Naive thymus-derived CD4-positive, alpha-beta T cell (primary cell): ENCODE measurements at regions of chr7 and their contacts with region 1.

Region 1: DNA sequence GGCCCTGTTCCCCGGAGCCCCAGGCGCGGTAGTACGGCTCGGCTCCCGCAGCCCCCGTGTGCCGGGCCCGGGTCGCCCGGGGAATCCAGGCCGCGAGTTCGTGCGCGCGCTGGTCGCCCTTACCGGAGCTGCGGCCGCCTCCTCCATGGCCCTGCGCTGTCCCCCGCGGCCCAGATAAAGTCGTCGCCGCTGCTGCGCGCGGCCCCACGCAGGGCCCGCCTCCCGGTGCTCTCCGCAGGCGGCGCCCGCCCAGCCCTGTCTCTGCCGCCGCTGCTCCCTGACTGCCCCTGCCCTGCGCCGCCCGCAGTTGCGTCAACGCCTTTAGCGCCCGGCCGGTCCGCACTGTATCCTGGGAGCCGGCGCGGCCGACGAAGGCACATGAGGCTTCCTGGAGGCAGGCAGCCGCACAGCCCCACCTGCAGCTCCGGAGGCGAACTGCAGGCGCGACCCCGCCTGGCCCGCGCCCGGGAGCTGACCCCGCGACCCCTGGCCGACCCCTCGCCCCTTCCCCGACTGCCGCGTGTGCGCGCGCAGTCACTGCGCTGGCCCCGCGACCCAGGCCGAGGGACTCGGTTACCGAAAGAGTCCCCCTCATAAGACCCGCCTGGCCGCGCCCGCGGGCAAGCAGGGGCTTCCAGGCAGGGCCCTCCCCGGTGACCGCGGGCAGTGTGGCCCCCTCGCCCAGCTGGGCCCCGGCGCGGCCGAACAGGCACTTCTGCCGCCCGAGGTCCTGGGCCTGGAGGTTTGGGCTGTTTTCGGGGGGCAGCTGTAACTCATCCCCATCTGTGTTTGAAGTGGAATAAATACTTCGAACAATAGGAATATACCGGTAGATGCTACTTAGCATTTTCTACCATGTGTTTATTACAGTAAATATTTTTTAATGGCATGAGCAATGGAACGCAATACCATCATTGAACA is 127.1 kb upstream of the ZNF746 start:
- DNase-seq: peak; percentile 79 to 93 (median 84)
- ATAC-seq: peak; percentile 95
- H3K4me3 ChIP-seq: peak overlapping the region; percentile 88
- H3K4me3 Mint-ChIP-seq: peak overlapping the region; percentile 91 to 96 (median 94)
- H3K27ac ChIP-seq: peak overlapping the region; percentile 80
- H3K27ac Mint-ChIP-seq: peak overlapping the region; percentile 50 to 95 (median 90)
- H3K4me1 ChIP-seq: peaks cover 19 to 37% of the 10 kb centered on the region in 2 donors
- H3K4me1 Mint-ChIP-seq: peaks cover 28 to 42% (median 37%) of the 10 kb centered on the region in 7 donors
- H3K27me3 ChIP-seq: no peaks in the 10 kb centered on the region
- H3K27me3 Mint-ChIP-seq: peaks cover 0 to 24% (median 4%) of the 10 kb centered on the region in 5 donors

Region 2: DNA sequence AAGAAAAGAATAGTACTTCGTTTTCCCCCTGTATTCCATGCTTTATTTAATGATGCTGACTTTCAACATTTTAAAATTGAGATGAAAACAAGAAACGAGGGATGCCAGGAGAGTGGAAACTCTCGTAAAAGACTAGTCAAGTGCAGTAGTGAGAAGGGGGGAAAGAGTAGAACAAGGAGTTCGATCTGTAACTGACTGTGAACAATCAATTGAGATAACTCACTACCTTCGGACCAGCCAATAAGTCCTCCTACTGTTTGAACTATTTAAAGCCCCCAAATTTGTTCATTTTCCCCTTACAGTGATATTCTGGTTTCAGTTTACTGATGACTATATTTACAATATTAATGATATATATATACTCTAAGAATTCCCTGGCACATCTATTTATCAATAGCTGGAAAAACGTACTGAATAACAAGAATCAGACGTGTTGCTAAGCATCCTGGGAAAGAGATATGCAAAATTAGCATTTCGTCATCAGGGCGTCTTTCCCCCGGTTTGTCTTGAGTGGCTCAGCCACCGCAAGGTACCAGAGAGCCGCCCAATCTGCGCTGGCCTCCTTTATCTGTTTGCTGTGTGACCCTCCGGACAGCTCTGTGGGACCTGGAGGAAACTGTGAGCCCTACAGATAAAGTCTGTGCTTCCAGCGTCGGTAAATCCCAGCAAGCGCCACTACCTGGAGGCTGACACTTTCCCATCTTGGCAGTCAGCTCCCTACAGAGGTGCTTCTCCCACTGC is 637.5 kb before region 1 on chr7:
- CTCF ChIA-PET with region 1: no interaction called
- POLR2A ChIA-PET with region 1: no interaction called
- intact Hi-C with region 1: loop called in 1 of 2 experiments (anchors 10 kb)
- DNase-seq: peak; percentile 43 to 91 (median 88)
- ATAC-seq: peak; percentile 87
- H3K4me3 ChIP-seq: peak overlapping the region; percentile 97
- H3K4me3 Mint-ChIP-seq: peak overlapping the region; percentile 92 to 99 (median 98)
- H3K27ac ChIP-seq: peak overlapping the region; percentile 85
- H3K27ac Mint-ChIP-seq: peak overlapping the region; percentile 90 to 97 (median 96)
- H3K4me1 ChIP-seq: peaks cover 26% of the 10 kb centered on the region in 2 donors
- H3K4me1 Mint-ChIP-seq: peaks cover 26 to 53% (median 48%) of the 10 kb centered on the region in 7 donors
- H3K27me3 ChIP-seq: no peaks in the 10 kb centered on the region
- H3K27me3 Mint-ChIP-seq: peaks cover 0 to 27% (median 0%) of the 10 kb centered on the region in 5 donors

Region 3: GRCh38 chr7:149195180-149196150 is 429.2 kb before region 1 on chr7 and contains the start of gene ZNF282:
- CTCF ChIA-PET with region 1: no interaction called
- POLR2A ChIA-PET with region 1: no interaction called
- intact Hi-C with region 1: loop called in 1 of 2 experiments (anchors 5 kb)
- DNase-seq: peak; percentile 43 to 84 (median 56)
- ATAC-seq: peak; percentile 91
- H3K4me3 ChIP-seq: peak within 1 kb of the TSS; percentile 82
- H3K4me3 Mint-ChIP-seq: peak within 1 kb of the TSS; percentile 83 to 94 (median 90)
- H3K27ac ChIP-seq: peak within 1 kb of the TSS; percentile 77
- H3K27ac Mint-ChIP-seq: peak within 1 kb of the TSS; percentile 79 to 97 (median 86)
- H3K4me1 ChIP-seq: peaks cover 6 to 8% of the 10 kb centered on the region in 2 donors
- H3K4me1 Mint-ChIP-seq: peaks cover 20 to 52% (median 47%) of the 10 kb centered on the region in 7 donors
- H3K27me3 ChIP-seq: no peaks in the 10 kb centered on the region
- H3K27me3 Mint-ChIP-seq: peaks cover 0 to 3% (median 0%) of the 10 kb centered on the region in 5 donors
- total RNA-seq, gene ZNF282: 12.1 to 36.7 (median 15.1) TPM

Region 4: DNA sequence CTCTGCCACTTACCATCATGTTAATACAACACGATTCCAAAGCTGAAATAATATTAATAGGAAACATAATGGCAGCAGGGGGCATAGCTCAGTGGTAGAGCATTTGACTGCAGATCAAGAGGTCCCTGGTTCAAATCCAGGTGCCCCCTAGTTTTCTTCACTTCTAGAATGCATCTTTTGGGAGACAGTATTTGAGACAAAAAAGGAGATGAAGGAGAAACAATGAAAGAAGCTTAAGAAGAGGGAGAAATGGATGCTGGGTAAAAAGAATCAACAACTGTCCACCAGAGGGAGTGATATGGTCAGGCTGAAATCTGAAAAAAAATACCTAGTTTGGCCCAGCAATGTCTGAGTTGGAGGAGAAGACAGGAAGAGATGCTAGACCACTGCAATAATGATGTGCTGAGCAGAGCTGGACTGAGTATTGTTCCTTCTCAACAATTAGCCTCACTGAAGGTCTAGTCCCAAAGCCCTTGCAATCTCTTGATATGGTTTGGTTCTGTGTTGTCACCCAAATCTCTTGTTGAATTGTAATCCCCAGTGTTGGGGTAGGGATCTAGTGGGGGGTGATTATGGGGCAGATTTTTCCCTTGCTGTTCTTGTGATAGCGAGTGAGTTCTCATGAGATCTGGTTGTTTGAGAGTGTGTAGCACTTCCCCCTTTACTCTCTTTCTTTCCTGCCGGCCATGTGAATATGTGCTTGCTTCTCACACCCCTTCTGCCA is 314.4 kb before region 1 on chr7:
- CTCF ChIA-PET with region 1: no interaction called
- POLR2A ChIA-PET with region 1: no interaction called
- intact Hi-C with region 1: loop called in 1 of 2 experiments (anchors 5 kb)
- DNase-seq: peak in 3 of 9 donors; percentile 11 to 30 (median 26)
- ATAC-seq: peak; percentile 65
- H3K4me3 ChIP-seq: no peak overlapping the region
- H3K4me3 Mint-ChIP-seq: peak overlapping the region in 1 of 10 donors; percentile 0
- H3K27ac ChIP-seq: no peak overlapping the region
- H3K27ac Mint-ChIP-seq: peak overlapping the region in 5 of 9 donors; percentile 2 to 42 (median 9)
- H3K4me1 ChIP-seq: no peaks in the 10 kb centered on the region
- H3K4me1 Mint-ChIP-seq: peaks cover 0 to 6% (median 5%) of the 10 kb centered on the region in 7 donors
- H3K27me3 ChIP-seq: no peaks in the 10 kb centered on the region
- H3K27me3 Mint-ChIP-seq: peaks cover 0 to 12% (median 0%) of the 10 kb centered on the region in 5 donors

Region 5: DNA sequence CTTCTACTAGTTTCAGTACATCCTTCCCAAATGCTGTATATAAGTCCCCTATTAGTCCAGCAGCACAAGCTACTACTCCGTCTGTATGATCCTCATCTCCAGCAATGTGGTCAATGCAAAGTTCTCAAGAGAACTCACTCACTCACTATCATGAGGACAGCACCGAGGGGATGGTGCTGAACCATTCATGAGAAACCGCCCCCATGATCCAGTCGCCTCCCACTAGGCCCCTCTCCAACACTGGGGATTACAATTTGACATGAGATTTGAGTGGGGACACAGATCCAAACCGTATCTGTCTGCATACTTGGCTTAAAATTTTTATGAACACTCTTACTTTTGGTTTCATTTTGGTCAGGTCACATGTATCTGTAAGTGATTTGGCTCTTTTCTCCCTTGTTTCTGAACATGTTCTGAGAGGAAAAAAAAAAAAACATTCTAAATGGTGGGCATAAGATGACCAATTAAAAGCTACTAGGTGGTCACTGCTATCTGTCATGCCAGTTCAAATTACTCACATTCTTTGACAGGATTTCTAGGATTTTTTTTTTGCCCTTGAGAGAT is 302.6 kb before region 1 on chr7:
- CTCF ChIA-PET with region 1: no interaction called
- POLR2A ChIA-PET with region 1: no interaction called
- intact Hi-C with region 1: no loop called
- DNase-seq: peak in 2 of 9 donors; percentile 6
- ATAC-seq: no peak
- H3K4me3 ChIP-seq: peak overlapping the region; percentile 15
- H3K4me3 Mint-ChIP-seq: peak overlapping the region; percentile 1 to 74 (median 70)
- H3K27ac ChIP-seq: no peak overlapping the region
- H3K27ac Mint-ChIP-seq: peak overlapping the region in 6 of 9 donors; percentile 7 to 86 (median 64)
- H3K4me1 ChIP-seq: no peaks in the 10 kb centered on the region
- H3K4me1 Mint-ChIP-seq: peaks cover 7 to 29% (median 19%) of the 10 kb centered on the region in 7 donors
- H3K27me3 ChIP-seq: no peaks in the 10 kb centered on the region
- H3K27me3 Mint-ChIP-seq: peaks cover 7 to 12% (median 9%) of the 10 kb centered on the region in 5 donors

Region 6: GRCh38 chr7:149497456-149498261 is 127.0 kb before region 1 on chr7 and contains the start of gene ZNF746:
- CTCF ChIA-PET with region 1: no interaction called
- POLR2A ChIA-PET with region 1: no interaction called
- intact Hi-C with region 1: loop called (anchors 1 to 2 kb)
- DNase-seq: peak; percentile 57 to 85 (median 76)
- ATAC-seq: peak; percentile 96
- H3K4me3 ChIP-seq: peak within 1 kb of the TSS; percentile 67
- H3K4me3 Mint-ChIP-seq: peak within 1 kb of the TSS; percentile 92 to 99 (median 96)
- H3K27ac ChIP-seq: peak within 1 kb of the TSS; percentile 82
- H3K27ac Mint-ChIP-seq: peak within 1 kb of the TSS; percentile 84 to 97 (median 95)
- H3K4me1 ChIP-seq: peaks cover 19 to 27% of the 10 kb centered on the region in 2 donors
- H3K4me1 Mint-ChIP-seq: peaks cover 21 to 46% (median 30%) of the 10 kb centered on the region in 7 donors
- H3K27me3 ChIP-seq: no peaks in the 10 kb centered on the region
- H3K27me3 Mint-ChIP-seq: peaks cover 0 to 3% (median 0%) of the 10 kb centered on the region in 5 donors
- total RNA-seq, gene ZNF746: 23.6 to 32.0 (median 24.4) TPM

Region 7: DNA sequence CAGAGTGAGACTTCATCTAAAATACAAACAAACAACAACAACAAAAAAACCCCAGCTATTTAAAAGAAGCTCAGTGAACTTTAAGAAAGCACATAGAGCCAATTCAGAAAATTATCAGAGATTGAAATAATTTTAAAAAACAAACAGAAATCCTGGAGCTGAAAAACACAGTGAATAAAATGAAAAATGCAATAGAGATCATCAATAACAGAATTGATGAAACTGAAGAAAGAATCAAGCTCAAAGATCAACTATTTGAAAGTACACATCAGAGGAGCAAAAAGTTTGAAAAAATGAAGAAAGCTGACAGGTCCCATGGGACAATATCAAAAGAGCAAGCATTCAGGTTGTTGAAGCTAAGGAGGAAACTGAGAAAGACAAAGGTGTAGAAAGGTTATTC is 114.9 kb before region 1 on chr7:
- CTCF ChIA-PET with region 1: no interaction called
- POLR2A ChIA-PET with region 1: no interaction called
- intact Hi-C with region 1: no loop called
- DNase-seq: no peak
- ATAC-seq: no peak
- H3K4me3 ChIP-seq: no peak overlapping the region
- H3K4me3 Mint-ChIP-seq: no peak overlapping the region
- H3K27ac ChIP-seq: no peak overlapping the region
- H3K27ac Mint-ChIP-seq: no peak overlapping the region
- H3K4me1 ChIP-seq: no peaks in the 10 kb centered on the region
- H3K4me1 Mint-ChIP-seq: no peaks in the 10 kb centered on the region
- H3K27me3 ChIP-seq: no peaks in the 10 kb centered on the region
- H3K27me3 Mint-ChIP-seq: peaks cover 0 to 13% (median 0%) of the 10 kb centered on the region in 5 donors

Region 8: GRCh38 chr7:149838224-149838947 is 213.7 kb after region 1 on chr7 and contains the start of gene ZNF862:
- CTCF ChIA-PET with region 1: no interaction called
- POLR2A ChIA-PET with region 1: no interaction called
- intact Hi-C with region 1: loop called in 1 of 2 experiments (anchors 1 kb)
- DNase-seq: peak; percentile 84 to 96 (median 94)
- ATAC-seq: peak; percentile 99
- H3K4me3 ChIP-seq: peak within 1 kb of the TSS; percentile 67
- H3K4me3 Mint-ChIP-seq: peak within 1 kb of the TSS; percentile 85 to 97 (median 91)
- H3K27ac ChIP-seq: peak within 1 kb of the TSS; percentile 79
- H3K27ac Mint-ChIP-seq: peak within 1 kb of the TSS; percentile 77 to 96 (median 88)
- H3K4me1 ChIP-seq: peaks cover 12 to 22% of the 10 kb centered on the region in 2 donors
- H3K4me1 Mint-ChIP-seq: peaks cover 25 to 52% (median 48%) of the 10 kb centered on the region in 7 donors
- H3K27me3 ChIP-seq: no peaks in the 10 kb centered on the region
- H3K27me3 Mint-ChIP-seq: peaks cover 0 to 15% (median 3%) of the 10 kb centered on the region in 5 donors
- total RNA-seq, gene ZNF862: 36.9 to 112 (median 41.8) TPM

Region 9: DNA sequence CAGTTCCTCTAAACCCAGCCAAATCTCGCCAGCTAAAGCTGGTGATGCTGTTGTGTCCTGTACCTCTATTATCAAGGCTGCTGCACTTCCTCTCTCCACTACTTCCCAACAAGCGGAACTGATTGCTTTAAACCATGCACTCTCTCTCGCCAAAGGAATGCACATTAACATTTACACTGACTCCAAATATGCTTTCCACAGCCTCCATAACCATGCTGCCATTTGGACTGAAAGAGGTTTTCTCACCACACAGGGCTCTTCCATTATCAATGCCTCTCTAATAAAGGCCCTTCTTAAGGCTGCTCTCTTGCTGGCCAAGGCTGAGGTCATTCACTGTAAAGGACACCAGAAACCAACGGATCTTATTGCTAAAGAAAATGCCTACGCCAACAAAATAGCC is 687.0 kb after region 1 on chr7:
- CTCF ChIA-PET with region 1: no interaction called
- POLR2A ChIA-PET with region 1: no interaction called
- intact Hi-C with region 1: no loop called
- DNase-seq: no peak
- ATAC-seq: no peak
- H3K4me3 ChIP-seq: no peak overlapping the region
- H3K4me3 Mint-ChIP-seq: no peak overlapping the region
- H3K27ac ChIP-seq: no peak overlapping the region
- H3K27ac Mint-ChIP-seq: no peak overlapping the region
- H3K4me1 ChIP-seq: no peaks in the 10 kb centered on the region
- H3K4me1 Mint-ChIP-seq: peaks cover 0 to 15% (median 0%) of the 10 kb centered on the region in 7 donors
- H3K27me3 ChIP-seq: no peaks in the 10 kb centered on the region
- H3K27me3 Mint-ChIP-seq: no peaks in the 10 kb centered on the region

Region 10: DNA sequence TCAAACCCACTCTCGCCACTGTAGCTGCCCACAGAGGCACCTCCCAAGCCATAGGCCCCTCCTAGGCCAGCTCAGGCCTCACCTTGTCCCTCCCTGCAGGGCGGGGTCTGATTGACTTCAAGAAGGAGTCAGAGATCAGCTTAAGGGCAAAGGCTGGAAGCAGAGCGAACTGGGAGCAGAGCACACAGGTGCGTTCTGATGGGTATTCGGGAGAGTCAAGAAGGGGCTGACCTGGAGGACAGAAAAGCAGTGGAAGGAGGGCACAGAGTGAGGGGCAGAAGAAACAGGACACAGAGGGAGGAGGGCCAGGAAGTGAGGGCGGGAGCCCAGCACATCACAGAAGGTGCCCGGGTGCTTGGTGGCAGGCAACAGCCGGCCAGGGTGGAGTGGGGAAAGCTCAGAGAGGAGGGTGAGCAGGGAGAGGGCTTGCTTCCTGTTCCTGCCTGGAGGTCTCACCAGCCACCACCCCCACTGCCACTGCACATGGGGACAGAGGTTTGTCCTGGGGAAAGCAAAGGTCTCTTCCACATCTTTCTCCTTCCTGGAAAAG is 1227.8 kb after region 1 on chr7 and contains the start of gene AOC1:
- CTCF ChIA-PET with region 1: no interaction called
- POLR2A ChIA-PET with region 1: no interaction called
- intact Hi-C with region 1: no loop called
- DNase-seq: no peak
- ATAC-seq: no peak
- H3K4me3 ChIP-seq: no peak within 1 kb of the TSS
- H3K4me3 Mint-ChIP-seq: no peak within 1 kb of the TSS
- H3K27ac ChIP-seq: no peak within 1 kb of the TSS
- H3K27ac Mint-ChIP-seq: no peak within 1 kb of the TSS
- H3K4me1 ChIP-seq: no peaks in the 10 kb centered on the region
- H3K4me1 Mint-ChIP-seq: peaks cover 0 to 5% (median 0%) of the 10 kb centered on the region in 7 donors
- H3K27me3 ChIP-seq: peaks cover 0 to 5% of the 10 kb centered on the region in 2 donors
- H3K27me3 Mint-ChIP-seq: peaks cover 17 to 40% (median 22%) of the 10 kb centered on the region in 5 donors
- total RNA-seq, gene AOC1: 0.56 TPM in 1 of 5 experiments, not detected in the others

Region 11: DNA sequence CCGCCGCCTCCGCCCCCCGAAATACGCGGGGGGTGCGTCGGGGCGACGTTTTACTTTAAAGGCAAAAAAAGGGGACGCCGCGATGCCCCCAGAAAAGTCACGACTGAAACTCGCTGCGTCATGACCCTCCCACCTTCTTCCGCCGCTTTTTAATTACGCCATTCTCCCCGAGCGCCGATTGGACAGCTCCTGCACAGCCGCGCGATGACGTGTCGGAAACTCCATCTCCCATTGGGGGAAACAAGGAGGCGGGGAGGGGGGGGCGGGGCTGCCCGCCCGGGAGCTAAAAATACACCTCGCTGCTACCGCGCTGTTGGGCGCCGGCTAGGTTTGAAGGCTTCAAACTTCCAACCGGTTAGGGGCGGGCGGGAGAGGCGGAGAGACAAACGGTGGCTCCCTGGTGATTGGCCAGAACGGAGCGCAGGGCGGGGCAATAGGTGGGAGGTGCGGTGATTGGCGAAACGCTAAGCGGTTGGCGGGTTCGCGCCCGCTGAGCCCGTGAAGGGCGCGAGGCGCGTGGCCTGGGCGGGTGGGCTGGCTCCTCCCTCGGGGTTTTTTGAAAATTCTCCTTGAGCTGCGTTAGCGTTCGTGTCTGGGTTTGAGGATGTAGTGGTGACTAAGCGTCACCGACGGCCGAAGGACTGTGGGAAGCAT is 1895.2 kb after region 1 on chr7 and contains the start of gene RHEB:
- CTCF ChIA-PET with region 1: no interaction called
- POLR2A ChIA-PET with region 1: no interaction called
- intact Hi-C with region 1: loop called in 1 of 2 experiments (anchors 10 kb)
- DNase-seq: peak; percentile 93 to 99 (median 98)
- ATAC-seq: peak; percentile 91
- H3K4me3 ChIP-seq: peak within 1 kb of the TSS; percentile 91
- H3K4me3 Mint-ChIP-seq: peak within 1 kb of the TSS; percentile 87 to 97 (median 94)
- H3K27ac ChIP-seq: peak within 1 kb of the TSS; percentile 88
- H3K27ac Mint-ChIP-seq: peak within 1 kb of the TSS; percentile 94 to 99 (median 98)
- H3K4me1 ChIP-seq: peaks cover 24 to 26% of the 10 kb centered on the region in 2 donors
- H3K4me1 Mint-ChIP-seq: peaks cover 32 to 44% (median 36%) of the 10 kb centered on the region in 7 donors
- H3K27me3 ChIP-seq: no peaks in the 10 kb centered on the region
- H3K27me3 Mint-ChIP-seq: peaks cover 0 to 12% (median 0%) of the 10 kb centered on the region in 5 donors
- total RNA-seq, gene RHEB: 31.2 to 62.6 (median 40.2) TPM